Endothelial cell of umbilical vein (primary cell): ENCODE measurements at regions of chr10 and their contacts with region 1.

Region 1: DNA sequence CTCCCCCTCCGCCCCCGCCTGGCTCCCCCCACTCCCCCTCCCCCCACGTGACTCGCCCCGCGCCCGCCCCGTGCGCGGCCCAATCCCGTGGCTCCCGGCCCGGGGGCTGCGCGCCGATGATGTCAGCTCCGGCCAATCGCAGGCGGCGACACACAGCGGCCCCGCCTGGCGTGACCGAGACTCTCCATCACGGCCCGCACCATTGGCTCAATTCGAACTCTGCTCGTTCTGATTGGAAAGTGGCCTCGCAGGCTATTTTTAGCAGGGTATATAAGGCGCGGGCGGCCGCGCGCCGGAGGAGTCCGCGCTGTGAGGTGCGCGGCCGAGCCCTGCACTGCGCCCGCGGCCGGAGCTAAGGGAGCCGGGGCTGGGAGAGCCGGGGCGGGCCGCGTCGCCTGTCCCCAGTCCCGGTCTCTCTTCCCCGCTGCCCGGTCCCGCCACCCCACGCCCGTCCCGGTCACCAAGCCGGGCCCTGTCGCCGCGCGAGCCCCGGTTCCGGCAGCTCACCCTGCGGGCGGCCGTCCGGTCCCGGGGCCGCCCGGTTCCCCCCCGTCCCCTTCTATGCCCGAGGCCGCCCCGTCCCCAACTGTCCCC is 345 bp upstream of the KLF6 start:
- DNase-seq: peak; percentile 98
- H3K4me3 ChIP-seq: peak overlapping the region; percentile 22 to 95 (median 44)
- H3K27ac ChIP-seq: peak overlapping the region; percentile 98
- H3K4me1 ChIP-seq: peaks cover 26% of the 10 kb centered on the region
- H3K27me3 ChIP-seq: no peaks in the 10 kb centered on the region
- CTCF ChIP-seq: no peak
- POLR2A ChIP-seq: peak; percentile 99

Region 2: DNA sequence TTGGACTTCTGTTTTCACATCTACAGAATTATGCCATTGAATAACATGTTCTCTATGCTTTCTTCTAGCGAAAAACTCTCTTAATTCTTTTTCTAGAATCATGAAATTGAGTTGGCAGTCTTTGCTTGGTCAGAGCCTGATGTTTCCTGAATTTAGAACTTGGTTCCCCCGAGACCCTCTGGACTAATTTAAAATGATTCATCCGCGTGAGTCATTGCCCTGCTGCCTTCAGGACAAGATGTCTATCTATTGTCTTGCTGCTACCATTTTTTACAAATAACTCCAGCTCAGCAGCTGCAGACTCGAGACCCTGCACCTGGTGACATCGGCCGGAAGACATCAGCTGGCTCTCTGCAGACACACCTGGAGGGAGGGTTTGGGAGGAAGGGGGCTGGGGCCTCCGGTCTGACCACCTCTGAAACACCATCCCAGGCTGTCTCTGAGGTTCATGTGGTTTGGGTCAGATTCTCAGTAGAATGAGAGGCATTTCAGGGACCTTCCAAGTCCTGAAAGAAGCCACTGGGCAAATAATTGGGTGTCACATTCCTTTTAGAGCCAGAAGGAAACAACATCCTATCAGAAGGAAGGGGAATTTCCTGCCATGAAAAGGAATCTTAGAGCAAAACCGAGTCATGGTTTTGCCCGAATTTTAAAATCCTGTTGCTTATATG is 20.6 kb after region 1 on chr10:
- CTCF ChIA-PET with region 1: interaction called, 5 read pairs
- POLR2A ChIA-PET with region 1: interaction called, 26 read pairs
- dilution Hi-C with region 1: no loop called
- intact Hi-C with region 1: loop called (anchors 1 kb)
- DNase-seq: peak; percentile 96
- H3K4me3 ChIP-seq: peak overlapping the region in 1 of 3 experiments; percentile 31
- H3K27ac ChIP-seq: peak overlapping the region; percentile 100
- H3K4me1 ChIP-seq: peaks cover 70% of the 10 kb centered on the region
- H3K27me3 ChIP-seq: no peaks in the 10 kb centered on the region
- CTCF ChIP-seq: no peak
- POLR2A ChIP-seq: peak; percentile 29

Region 3: GRCh38 chr10:3852147-3852904 is 67.0 kb after region 1 on chr10:
- CTCF ChIA-PET with region 1: no interaction called
- POLR2A ChIA-PET with region 1: interaction called, 25 read pairs
- dilution Hi-C with region 1: no loop called
- intact Hi-C with region 1: loop called (anchors 2 kb)
- DNase-seq: peak; percentile 98
- H3K4me3 ChIP-seq: no peak overlapping the region
- H3K27ac ChIP-seq: peak overlapping the region; percentile 93
- H3K4me1 ChIP-seq: peaks cover 23% of the 10 kb centered on the region
- H3K27me3 ChIP-seq: no peaks in the 10 kb centered on the region
- CTCF ChIP-seq: no peak
- POLR2A ChIP-seq: no peak

Region 4: DNA sequence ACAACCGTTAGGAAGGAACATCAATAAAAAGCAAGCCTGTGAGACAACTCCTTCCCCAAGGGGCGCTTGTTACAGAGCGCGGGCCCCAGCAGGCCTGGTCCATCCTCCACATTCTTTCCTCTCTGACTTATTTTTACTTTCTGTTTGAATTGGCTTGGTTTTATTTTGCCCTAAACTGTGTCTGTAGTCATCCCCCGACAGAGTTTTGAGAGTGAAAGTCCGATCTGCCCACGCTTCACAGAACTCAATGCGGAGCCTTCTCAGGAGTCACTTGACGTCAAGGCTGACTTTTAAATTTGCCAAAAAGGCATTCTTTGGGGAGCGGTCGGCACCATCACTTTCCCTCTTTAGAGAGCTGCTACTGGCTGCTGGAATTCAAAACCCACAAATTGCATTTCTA is 149.8 kb after region 1 on chr10:
- CTCF ChIA-PET with region 1: interaction called, 3 read pairs
- POLR2A ChIA-PET with region 1: interaction called, 3 read pairs
- dilution Hi-C with region 1: no loop called
- intact Hi-C with region 1: loop called (anchors 2 kb)
- DNase-seq: peak; percentile 26
- H3K4me3 ChIP-seq: no peak overlapping the region
- H3K27ac ChIP-seq: peak overlapping the region; percentile 75
- H3K4me1 ChIP-seq: peaks cover 24% of the 10 kb centered on the region
- H3K27me3 ChIP-seq: no peaks in the 10 kb centered on the region
- CTCF ChIP-seq: no peak
- POLR2A ChIP-seq: no peak

Region 5: GRCh38 chr10:4344511-4344994 is 559.2 kb after region 1 on chr10:
- CTCF ChIA-PET with region 1: no interaction called
- POLR2A ChIA-PET with region 1: no interaction called
- dilution Hi-C with region 1: no loop called
- intact Hi-C with region 1: loop called (anchors 1 kb)
- DNase-seq: no peak
- H3K4me3 ChIP-seq: no peak overlapping the region
- H3K27ac ChIP-seq: no peak overlapping the region
- H3K4me1 ChIP-seq: peaks cover 5% of the 10 kb centered on the region
- H3K27me3 ChIP-seq: no peaks in the 10 kb centered on the region
- CTCF ChIP-seq: no peak
- POLR2A ChIP-seq: no peak

Region 6: DNA sequence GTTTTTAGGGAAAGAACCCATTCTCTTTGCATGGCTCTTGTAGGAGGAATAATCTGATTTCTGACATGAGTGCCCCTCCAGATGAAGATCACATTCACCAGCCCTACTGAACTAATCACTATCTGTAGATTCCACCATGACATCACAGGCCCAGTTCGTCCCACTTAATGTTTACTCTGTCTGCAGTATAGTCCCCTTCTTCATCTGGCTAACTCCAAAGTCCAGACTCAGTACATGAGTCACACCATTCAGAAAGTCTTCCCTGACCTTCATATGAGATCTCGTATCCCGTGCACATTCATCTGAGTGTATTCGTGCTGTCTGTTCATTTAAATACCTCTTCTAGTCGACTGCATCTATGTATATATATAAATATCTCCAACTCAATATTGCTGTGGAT is 674.2 kb after region 1 on chr10:
- CTCF ChIA-PET with region 1: no interaction called
- POLR2A ChIA-PET with region 1: no interaction called
- dilution Hi-C with region 1: no loop called
- intact Hi-C with region 1: no loop called
- DNase-seq: no peak
- H3K4me3 ChIP-seq: no peak overlapping the region
- H3K27ac ChIP-seq: no peak overlapping the region
- H3K4me1 ChIP-seq: no peaks in the 10 kb centered on the region
- H3K27me3 ChIP-seq: no peaks in the 10 kb centered on the region
- CTCF ChIP-seq: no peak
- POLR2A ChIP-seq: no peak

Region 7: DNA sequence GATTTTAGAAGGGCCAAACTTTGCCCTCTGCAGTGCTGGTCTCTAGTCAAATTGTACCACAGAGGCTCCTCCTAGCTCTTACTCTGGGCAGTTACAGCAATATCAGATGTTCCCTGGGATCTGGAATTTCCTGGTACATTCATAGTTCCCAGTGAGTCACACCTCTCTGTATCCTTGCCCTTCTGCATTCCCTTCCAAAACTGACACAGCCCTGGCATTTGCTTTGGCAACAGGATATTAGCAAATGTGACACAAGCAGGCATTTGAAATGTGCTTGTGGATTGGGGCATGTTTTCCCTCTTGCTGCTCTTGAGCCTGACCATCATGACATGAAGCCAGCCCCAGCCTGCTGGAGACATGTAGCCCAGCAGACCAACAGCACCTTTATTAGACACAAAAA is 755.9 kb after region 1 on chr10:
- CTCF ChIA-PET with region 1: no interaction called
- POLR2A ChIA-PET with region 1: no interaction called
- dilution Hi-C with region 1: no loop called
- intact Hi-C with region 1: loop called (anchors 5 kb)
- DNase-seq: peak; percentile 94
- H3K4me3 ChIP-seq: no peak overlapping the region
- H3K27ac ChIP-seq: peak overlapping the region; percentile 93
- H3K4me1 ChIP-seq: peaks cover 10% of the 10 kb centered on the region
- H3K27me3 ChIP-seq: no peaks in the 10 kb centered on the region
- CTCF ChIP-seq: peak in 1 of 2 donors; percentile 18
- POLR2A ChIP-seq: no peak

Region 8: DNA sequence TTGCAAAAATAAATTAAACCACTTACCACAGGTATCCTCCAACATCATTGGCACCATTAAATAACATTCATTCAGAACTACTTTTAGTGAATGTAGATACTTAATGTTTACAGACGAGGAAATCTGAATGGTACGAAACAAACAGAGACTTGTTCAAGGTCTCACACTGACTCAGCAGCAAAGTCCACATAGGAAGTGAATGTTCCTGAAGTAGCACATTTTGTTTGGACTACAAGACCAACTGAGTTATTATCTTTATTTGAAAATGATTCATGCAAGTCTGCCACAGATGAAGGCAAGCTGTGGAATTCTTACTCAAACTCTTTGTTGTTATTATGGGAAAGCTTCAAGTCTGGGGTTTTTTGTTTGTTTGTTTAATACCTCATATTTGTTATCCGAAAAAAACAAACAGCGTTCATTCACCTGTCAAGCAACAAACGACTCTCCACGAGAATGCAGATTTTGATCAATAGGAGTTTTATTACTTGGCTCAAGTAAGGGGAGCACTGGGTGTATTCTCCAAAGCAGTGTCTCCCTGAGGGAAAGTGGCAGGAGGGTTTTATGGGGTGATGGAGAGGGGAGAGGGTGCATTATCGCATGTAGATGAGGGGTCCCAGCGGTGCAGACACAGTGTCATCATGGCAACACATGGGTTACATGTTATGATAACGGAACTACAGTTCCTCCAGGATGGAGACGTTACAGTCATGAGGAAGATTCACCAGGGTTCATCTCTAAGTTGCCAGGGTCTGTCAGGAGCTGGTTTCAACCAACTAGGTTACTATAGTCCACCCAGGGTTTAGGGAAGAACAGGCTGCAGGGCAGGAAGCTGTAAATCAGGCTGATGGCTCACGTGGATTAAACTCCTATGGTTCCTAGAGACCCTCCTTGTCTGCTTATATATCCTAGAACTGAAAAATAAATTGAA is 892.9 kb after region 1 on chr10:
- CTCF ChIA-PET with region 1: no interaction called
- POLR2A ChIA-PET with region 1: no interaction called
- dilution Hi-C with region 1: no loop called
- intact Hi-C with region 1: loop called (anchors 5 kb)
- DNase-seq: peak; percentile 94
- H3K4me3 ChIP-seq: peak overlapping the region; percentile 32 to 99 (median 71)
- H3K27ac ChIP-seq: peak overlapping the region; percentile 84
- H3K4me1 ChIP-seq: peaks cover 31% of the 10 kb centered on the region
- H3K27me3 ChIP-seq: no peaks in the 10 kb centered on the region
- CTCF ChIP-seq: no peak
- POLR2A ChIP-seq: no peak